MCF 10A (cell line): ENCODE measurements at regions of chr11 and their contacts with region 1.

Region 1: GRCh38 chr11:65652511-65653231 is 10.0 kb downstream of the RELA start:
- DNase-seq: peak; percentile 89
- H3K4me3 Mint-ChIP-seq: peak overlapping the region; percentile 78
- H3K27ac Mint-ChIP-seq: peak overlapping the region; percentile 95
- H3K4me1 Mint-ChIP-seq: peaks cover 29% of the 10 kb centered on the region
- H3K27me3 Mint-ChIP-seq: no peaks in the 10 kb centered on the region
- CTCF ChIP-seq: no peak

Region 2: GRCh38 chr11:65615229-65615941 is 37.3 kb before region 1 on chr11 and contains the start of gene PCNX3:
- CTCF ChIA-PET with region 1: no interaction called
- POLR2A ChIA-PET with region 1: interaction called, 45 read pairs
- intact Hi-C with region 1: loop called (anchors 5 kb)
- DNase-seq: peak; percentile 100
- H3K4me3 Mint-ChIP-seq: peak within 1 kb of the TSS; percentile 91
- H3K27ac Mint-ChIP-seq: peak within 1 kb of the TSS; percentile 96
- H3K4me1 Mint-ChIP-seq: peaks cover 26% of the 10 kb centered on the region
- H3K27me3 Mint-ChIP-seq: no peaks in the 10 kb centered on the region
- CTCF ChIP-seq: no peak
- total RNA-seq, gene PCNX3: 40.9 and 45.8 TPM in 2 replicates

Region 3: GRCh38 chr11:65637794-65638317 is 14.8 kb before region 1 on chr11 and contains the start of gene SIPA1:
- CTCF ChIA-PET with region 1: interaction called, 4 read pairs
- POLR2A ChIA-PET with region 1: interaction called, 12 read pairs
- intact Hi-C with region 1: no loop called
- DNase-seq: peak; percentile 75
- H3K4me3 Mint-ChIP-seq: peak within 1 kb of the TSS; percentile 71
- H3K27ac Mint-ChIP-seq: no peak within 1 kb of the TSS
- H3K4me1 Mint-ChIP-seq: peaks cover 6% of the 10 kb centered on the region
- H3K27me3 Mint-ChIP-seq: no peaks in the 10 kb centered on the region
- CTCF ChIP-seq: peak; percentile 20
- total RNA-seq, gene SIPA1: 4.9 TPM in 2 replicates

Region 4: DNA sequence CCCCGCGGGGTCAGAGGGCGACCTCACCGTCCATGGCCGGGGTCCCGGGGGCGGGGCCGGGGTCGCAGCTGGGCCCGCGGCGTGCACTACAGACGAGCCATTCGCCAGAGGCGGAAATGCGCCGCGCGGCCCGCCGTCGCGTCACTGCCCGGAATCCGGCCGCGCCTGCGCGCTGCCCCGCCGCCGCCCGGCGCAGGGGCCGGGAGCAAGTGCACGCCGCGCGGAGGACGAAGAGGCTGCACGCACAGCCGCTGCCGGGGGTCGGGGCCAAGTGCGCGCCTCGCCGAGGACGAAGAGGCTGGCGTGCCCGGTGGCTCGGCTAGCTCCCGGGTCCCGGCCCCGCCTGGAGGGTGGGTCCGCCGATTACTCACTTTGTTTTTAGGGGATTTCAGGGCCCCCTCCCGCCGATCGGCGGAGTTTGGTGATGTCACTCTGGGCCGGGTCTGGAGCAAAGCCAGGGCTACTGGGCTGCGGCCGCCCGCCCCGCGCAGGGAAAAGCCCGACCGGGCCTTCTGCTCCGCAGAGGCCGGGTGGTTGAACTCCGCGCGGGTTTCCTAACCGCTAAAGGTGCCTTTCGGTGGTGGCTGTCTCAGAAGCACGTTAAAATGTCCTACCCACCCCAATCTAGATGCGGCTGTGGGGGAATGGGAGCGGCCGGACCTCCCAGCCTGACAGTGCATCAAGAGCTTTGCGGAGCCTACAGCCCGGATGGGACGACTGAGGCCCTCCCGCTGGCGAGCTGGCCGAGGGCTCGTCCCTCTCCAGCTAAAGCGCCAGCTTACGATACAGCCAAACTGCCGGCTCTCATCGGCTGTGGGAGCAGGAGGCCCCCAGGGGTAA is 10.3 kb after region 1 on chr11 and contains the start of gene RELA:
- CTCF ChIA-PET with region 1: interaction called, 5 read pairs
- POLR2A ChIA-PET with region 1: interaction called, 71 read pairs
- intact Hi-C with region 1: no loop called
- DNase-seq: peak; percentile 91
- H3K4me3 Mint-ChIP-seq: peak within 1 kb of the TSS; percentile 74
- H3K27ac Mint-ChIP-seq: peak within 1 kb of the TSS; percentile 73
- H3K4me1 Mint-ChIP-seq: peaks cover 12% of the 10 kb centered on the region
- H3K27me3 Mint-ChIP-seq: no peaks in the 10 kb centered on the region
- CTCF ChIP-seq: no peak
- total RNA-seq, gene RELA: 82.1 and 83.0 TPM in 2 replicates

Region 5: GRCh38 chr11:65680192-65680743 is 27.6 kb after region 1 on chr11:
- CTCF ChIA-PET with region 1: no interaction called
- POLR2A ChIA-PET with region 1: no interaction called
- intact Hi-C with region 1: no loop called
- DNase-seq: no peak
- H3K4me3 Mint-ChIP-seq: no peak overlapping the region
- H3K27ac Mint-ChIP-seq: no peak overlapping the region
- H3K4me1 Mint-ChIP-seq: no peaks in the 10 kb centered on the region
- H3K27me3 Mint-ChIP-seq: peaks cover 16% of the 10 kb centered on the region
- CTCF ChIP-seq: no peak

Region 6: GRCh38 chr11:65720237-65720934 is 67.7 kb after region 1 on chr11 and contains the start of gene RNASEH2C:
- CTCF ChIA-PET with region 1: no interaction called
- POLR2A ChIA-PET with region 1: interaction called, 13 read pairs
- intact Hi-C with region 1: no loop called
- DNase-seq: peak; percentile 86
- H3K4me3 Mint-ChIP-seq: peak within 1 kb of the TSS; percentile 97
- H3K27ac Mint-ChIP-seq: peak within 1 kb of the TSS; percentile 75
- H3K4me1 Mint-ChIP-seq: peaks cover 10% of the 10 kb centered on the region
- H3K27me3 Mint-ChIP-seq: no peaks in the 10 kb centered on the region
- CTCF ChIP-seq: no peak
- total RNA-seq, gene RNASEH2C: 27.4 and 35.7 TPM in 2 replicates